ENCODE measurements at regions of chr17 and their contacts with region 1.

Region 1: GRCh38 chr17:79188048-79188447 is 113.4 kb downstream of the ENGASE start:
- DNase-seq: no peak
- H3K4me3 ChIP-seq: no peak overlapping the region
- H3K27ac ChIP-seq: no peak overlapping the region
- H3K4me1 ChIP-seq: no peaks in the 10 kb centered on the region
- H3K27me3 ChIP-seq: peaks cover 16% of the 10 kb centered on the region
- CTCF ChIP-seq: peak; percentile 44 to 86

Region 2: DNA sequence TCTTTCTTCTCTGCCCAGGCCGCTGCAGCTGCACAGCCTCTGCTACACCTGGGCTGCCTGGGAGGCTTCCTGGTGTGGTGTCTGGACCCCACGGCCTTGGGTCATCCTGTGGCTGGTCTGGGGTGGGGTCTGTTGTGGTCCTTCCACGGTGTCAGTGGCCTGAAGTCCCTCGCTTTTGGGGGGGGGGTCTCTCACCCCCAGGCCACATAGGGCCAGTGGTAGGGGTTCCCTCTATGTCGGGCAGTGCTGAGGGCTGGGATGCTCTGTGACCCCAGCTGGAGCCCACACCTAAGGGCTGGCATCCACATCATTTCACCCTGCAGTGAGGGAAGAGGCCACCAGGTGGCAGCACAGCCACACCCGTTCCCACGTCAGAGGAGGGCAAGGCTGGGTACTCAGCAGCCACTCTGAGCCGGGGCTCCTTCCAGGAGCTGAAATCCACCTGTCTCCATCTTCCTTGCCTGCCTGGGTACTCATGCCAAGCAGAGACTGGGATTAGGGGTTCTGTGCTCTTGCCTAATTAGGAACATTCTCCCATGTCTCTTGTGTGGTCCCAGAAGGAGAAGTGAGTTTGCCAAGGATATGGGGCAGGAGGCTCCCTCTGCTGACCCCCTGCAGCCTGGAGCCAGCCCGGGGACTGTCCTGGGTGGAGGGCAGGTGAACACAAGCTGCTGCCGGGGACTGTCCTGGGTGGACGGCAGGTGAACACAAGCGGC is 100.5 kb before region 1 on chr17:
- CTCF ChIA-PET with region 1: no interaction called
- dilution Hi-C with region 1: no loop called
- in situ Hi-C with region 1: no loop called
- intact Hi-C with region 1: loop called (anchors 2 kb)
- DNase-seq: peak; percentile 21
- H3K4me3 ChIP-seq: no peak overlapping the region
- H3K27ac ChIP-seq: no peak overlapping the region
- H3K4me1 ChIP-seq: no peaks in the 10 kb centered on the region
- H3K27me3 ChIP-seq: no peaks in the 10 kb centered on the region
- CTCF ChIP-seq: peak; percentile 88

Region 3: DNA sequence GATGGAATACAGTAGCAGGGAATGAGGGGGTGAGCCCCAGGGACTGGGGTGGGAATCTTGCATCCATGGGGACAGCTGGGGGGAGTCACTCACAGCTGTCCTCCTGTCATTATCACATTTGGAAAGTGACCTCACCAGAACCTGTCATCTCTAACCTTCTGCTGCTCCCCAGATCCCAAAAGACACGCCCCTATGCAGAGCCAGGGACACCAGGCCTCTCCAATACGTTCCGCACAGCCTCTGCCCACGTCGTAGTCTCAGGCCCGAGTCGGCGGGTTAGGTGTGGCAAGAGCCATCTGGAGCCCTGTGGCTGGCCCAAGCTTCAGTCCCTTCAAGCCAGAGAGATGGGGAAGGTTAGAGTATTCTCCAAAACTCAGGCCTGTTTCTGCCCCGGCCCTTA is 100.9 kb after region 1 on chr17:
- CTCF ChIA-PET with region 1: no interaction called
- dilution Hi-C with region 1: loop called (anchors 5 kb)
- in situ Hi-C with region 1: no loop called
- intact Hi-C with region 1: no loop called
- DNase-seq: no peak
- H3K4me3 ChIP-seq: no peak overlapping the region
- H3K27ac ChIP-seq: no peak overlapping the region
- H3K4me1 ChIP-seq: no peaks in the 10 kb centered on the region
- H3K27me3 ChIP-seq: peaks cover 2% of the 10 kb centered on the region
- CTCF ChIP-seq: no peak

Region 4: GRCh38 chr17:79400989-79401703 is 213.1 kb after region 1 on chr17:
- CTCF ChIA-PET with region 1: no interaction called
- dilution Hi-C with region 1: no loop called
- in situ Hi-C with region 1: loop called in 1 of 2 experiments (anchors 5 kb)
- intact Hi-C with region 1: no loop called
- DNase-seq: peak; percentile 25
- H3K4me3 ChIP-seq: peak overlapping the region in 1 of 3 experiments; percentile 23
- H3K27ac ChIP-seq: no peak overlapping the region
- H3K4me1 ChIP-seq: no peaks in the 10 kb centered on the region
- H3K27me3 ChIP-seq: peaks cover 5% of the 10 kb centered on the region
- CTCF ChIP-seq: peak; percentile 79 to 91

Region 5: DNA sequence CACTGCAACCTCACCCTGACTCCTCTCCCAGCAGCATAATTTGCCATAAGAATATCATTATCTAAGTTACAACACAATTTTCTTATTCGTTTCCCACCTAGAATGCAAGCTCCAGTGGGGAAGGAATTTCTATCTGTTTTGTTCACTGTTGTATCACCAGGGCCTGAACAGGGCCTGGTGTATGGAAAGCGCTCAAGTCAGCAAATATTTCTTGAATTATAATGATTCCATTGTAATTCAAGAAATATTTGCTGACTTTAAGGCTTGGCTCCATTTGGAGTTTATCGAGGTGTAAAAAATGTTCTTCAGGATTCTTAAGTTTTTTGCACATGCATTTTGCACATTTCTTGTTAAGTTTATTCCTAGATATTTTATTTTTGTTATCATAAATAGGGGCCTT is 364.4 kb after region 1 on chr17:
- CTCF ChIA-PET with region 1: no interaction called
- dilution Hi-C with region 1: loop called (anchors 5 kb)
- in situ Hi-C with region 1: no loop called
- intact Hi-C with region 1: no loop called
- DNase-seq: no peak
- H3K4me3 ChIP-seq: no peak overlapping the region
- H3K27ac ChIP-seq: no peak overlapping the region
- H3K4me1 ChIP-seq: no peaks in the 10 kb centered on the region
- H3K27me3 ChIP-seq: no peaks in the 10 kb centered on the region
- CTCF ChIP-seq: no peak

Region 6: DNA sequence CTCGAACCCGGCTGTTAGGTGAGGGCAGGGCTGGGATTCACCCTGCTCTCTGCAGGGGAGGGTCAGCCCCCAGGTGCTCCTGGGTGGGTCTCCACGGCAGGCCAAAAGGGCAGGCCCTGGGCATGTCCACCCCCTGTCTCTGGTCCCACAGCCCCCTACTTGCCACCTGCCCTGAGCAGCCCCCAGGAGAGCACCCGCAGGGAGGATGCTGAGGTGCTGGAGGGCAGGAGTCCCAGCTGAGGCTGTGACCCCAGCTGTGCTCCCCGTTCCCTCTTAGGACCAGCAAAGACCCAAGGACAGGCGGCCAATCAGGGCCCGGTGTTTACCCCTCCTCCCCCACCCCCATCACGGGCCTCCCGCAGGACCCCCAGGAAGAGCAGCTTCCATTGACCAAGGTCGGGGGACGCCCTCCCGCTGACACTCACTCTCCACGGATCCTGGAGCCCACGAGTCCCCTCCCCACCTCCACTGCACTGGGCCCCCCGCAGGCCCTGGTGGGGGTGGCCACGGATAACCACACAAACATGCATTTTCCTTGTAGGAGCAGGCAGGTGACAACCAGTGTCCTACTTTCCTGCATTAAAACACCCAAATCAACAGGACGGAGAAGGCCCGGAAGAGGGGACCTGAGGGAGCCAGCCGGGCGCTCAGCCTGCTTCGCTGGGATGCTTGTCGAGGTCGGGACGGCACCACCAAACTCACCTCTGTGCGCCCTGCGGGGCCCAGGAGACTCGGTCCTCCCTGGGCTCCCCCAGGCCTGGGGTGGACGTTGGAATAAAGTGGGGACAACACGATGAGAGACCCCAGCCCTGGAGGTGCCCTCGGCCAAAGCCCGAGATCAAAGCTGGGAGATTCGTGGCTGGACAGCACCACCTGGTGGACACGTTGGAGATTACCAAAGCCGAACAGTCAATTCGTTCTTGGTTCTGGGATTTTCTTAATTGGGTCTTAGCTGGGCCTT is 520.2 kb after region 1 on chr17:
- CTCF ChIA-PET with region 1: no interaction called
- dilution Hi-C with region 1: no loop called
- in situ Hi-C with region 1: no loop called
- intact Hi-C with region 1: loop called (anchors 10 kb)
- DNase-seq: peak; percentile 25
- H3K4me3 ChIP-seq: no peak overlapping the region
- H3K27ac ChIP-seq: no peak overlapping the region
- H3K4me1 ChIP-seq: no peaks in the 10 kb centered on the region
- H3K27me3 ChIP-seq: no peaks in the 10 kb centered on the region
- CTCF ChIP-seq: peak; percentile 61 to 73

Measured in mammary epithelial cell (primary cell).